Mammary epithelial cell (primary cell): ENCODE measurements at regions of chr5 and their contacts with region 1.

Region 1: DNA sequence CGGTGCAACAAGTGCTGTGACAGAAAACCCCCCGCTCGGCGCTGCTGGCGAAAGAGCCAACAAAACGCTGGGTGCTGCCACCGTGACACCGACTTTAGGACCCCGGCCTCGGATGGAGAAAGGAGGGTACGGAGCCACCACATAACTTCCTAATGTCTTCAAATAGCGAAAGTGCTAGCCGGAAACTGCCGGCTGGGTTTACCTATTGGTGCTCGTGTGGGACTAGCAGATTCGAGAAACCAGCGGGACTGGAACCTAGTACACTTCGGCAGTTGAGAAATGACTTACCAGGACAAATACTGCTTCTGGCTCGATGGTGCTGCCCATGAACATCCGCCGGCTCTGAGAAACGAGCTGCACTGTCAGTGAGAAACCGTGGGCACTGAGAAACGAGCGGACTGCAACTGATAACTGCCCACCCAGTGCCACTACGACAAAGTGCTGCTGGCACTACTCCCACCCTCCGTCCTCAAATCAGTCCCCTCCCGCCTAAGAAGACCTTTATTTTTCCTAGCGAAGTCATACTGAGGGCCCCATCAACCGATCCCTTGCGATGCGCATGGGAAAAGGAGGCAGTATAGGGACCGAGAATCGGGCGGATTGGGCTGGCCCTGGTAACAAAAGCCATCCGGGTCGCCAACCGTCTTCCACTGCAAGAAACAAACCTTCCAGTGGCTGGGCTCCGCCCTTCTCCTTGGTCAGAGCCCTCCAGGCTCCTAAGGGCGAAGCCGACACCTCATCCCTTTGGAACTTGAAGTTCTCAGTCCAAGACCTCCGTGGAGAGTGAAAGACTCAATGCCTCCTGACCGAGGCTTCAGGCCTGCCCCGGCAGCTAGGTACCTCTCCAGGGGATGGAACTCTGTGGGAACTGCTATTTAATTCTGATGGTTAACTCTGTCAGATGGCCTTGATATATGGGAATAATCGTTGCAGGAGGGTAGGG is 27.0 kb upstream of the ANXA2R start:
- DNase-seq: peak; percentile 82
- H3K4me3 ChIP-seq: peak overlapping the region; percentile 56 to 81 (median 81)
- H3K27ac ChIP-seq: peak overlapping the region; percentile 98
- H3K4me1 ChIP-seq: peaks cover 24% of the 10 kb centered on the region
- H3K27me3 ChIP-seq: no peaks in the 10 kb centered on the region
- CTCF ChIP-seq: no peak

Region 2: GRCh38 chr5:42908509-42909488 is 158.3 kb before region 1 on chr5:
- CTCF ChIA-PET with region 1: no interaction called
- dilution Hi-C with region 1: no loop called
- in situ Hi-C with region 1: no loop called
- intact Hi-C with region 1: loop called (anchors 1 kb)
- DNase-seq: peak; percentile 71
- H3K4me3 ChIP-seq: peak overlapping the region; percentile 45 to 52 (median 46)
- H3K27ac ChIP-seq: no peak overlapping the region
- H3K4me1 ChIP-seq: no peaks in the 10 kb centered on the region
- H3K27me3 ChIP-seq: no peaks in the 10 kb centered on the region
- CTCF ChIP-seq: peak; percentile 79 to 86

Region 3: GRCh38 chr5:42950440-42951292 is 116.4 kb before region 1 on chr5:
- CTCF ChIA-PET with region 1: no interaction called
- dilution Hi-C with region 1: no loop called
- in situ Hi-C with region 1: no loop called
- intact Hi-C with region 1: loop called (anchors 1 kb)
- DNase-seq: peak; percentile 98
- H3K4me3 ChIP-seq: peak overlapping the region; percentile 27 to 38 (median 33)
- H3K27ac ChIP-seq: peak overlapping the region; percentile 78
- H3K4me1 ChIP-seq: peaks cover 13% of the 10 kb centered on the region
- H3K27me3 ChIP-seq: no peaks in the 10 kb centered on the region
- CTCF ChIP-seq: no peak

Region 4: DNA sequence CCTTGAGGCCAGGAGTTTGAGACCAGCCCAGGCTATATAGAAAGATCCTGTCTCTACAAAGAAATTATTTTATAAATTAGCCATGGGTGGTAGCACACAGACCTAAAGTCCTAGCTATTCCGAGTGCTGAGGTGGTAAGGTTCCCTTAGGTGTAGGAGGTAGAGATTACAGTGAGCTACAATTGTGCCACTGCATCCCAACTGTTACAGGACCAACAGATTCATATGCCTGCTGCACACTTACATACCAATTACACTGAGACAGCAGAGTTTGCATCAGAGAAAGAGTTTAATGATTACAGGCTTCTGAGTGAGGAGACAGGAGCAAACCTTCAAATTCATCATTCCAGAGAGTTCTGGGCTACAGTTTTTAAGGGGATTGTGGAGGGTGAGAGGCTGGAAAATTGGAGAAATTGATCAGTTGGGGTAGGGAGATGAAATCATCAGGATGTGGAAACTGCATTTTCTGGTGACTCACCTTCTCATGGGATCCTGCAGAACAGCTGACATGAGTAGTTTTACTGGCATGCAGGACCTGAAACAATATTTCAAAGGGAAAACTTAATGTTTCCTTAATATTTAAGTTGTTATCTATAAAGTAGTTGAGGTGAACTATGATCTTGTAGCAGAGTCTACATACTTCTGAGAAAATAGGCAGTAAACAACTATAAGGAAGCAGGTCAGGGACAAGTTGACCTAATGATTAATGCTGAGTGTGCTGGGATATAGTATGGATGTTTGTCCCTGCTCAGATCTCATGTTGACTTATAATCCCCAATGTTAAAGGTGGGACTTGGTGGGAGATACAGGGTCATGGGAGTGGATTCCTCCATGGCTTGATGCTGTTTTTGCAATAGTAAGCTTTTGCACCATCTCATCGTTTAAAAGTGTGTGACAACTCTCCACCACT is 81.7 kb before region 1 on chr5:
- CTCF ChIA-PET with region 1: interaction called, 12 read pairs
- dilution Hi-C with region 1: no loop called
- in situ Hi-C with region 1: no loop called
- intact Hi-C with region 1: loop called (anchors 2 kb)
- DNase-seq: peak; percentile 80
- H3K4me3 ChIP-seq: no peak overlapping the region
- H3K27ac ChIP-seq: peak overlapping the region; percentile 86
- H3K4me1 ChIP-seq: peaks cover 32% of the 10 kb centered on the region
- H3K27me3 ChIP-seq: no peaks in the 10 kb centered on the region
- CTCF ChIP-seq: no peak

Region 5: GRCh38 chr5:43110606-43111442 is 43.8 kb after region 1 on chr5:
- CTCF ChIA-PET with region 1: no interaction called
- dilution Hi-C with region 1: no loop called
- in situ Hi-C with region 1: no loop called
- intact Hi-C with region 1: no loop called
- DNase-seq: no peak
- H3K4me3 ChIP-seq: no peak overlapping the region
- H3K27ac ChIP-seq: no peak overlapping the region
- H3K4me1 ChIP-seq: peaks cover 4% of the 10 kb centered on the region
- H3K27me3 ChIP-seq: no peaks in the 10 kb centered on the region
- CTCF ChIP-seq: peak; percentile 26 to 28

Region 6: DNA sequence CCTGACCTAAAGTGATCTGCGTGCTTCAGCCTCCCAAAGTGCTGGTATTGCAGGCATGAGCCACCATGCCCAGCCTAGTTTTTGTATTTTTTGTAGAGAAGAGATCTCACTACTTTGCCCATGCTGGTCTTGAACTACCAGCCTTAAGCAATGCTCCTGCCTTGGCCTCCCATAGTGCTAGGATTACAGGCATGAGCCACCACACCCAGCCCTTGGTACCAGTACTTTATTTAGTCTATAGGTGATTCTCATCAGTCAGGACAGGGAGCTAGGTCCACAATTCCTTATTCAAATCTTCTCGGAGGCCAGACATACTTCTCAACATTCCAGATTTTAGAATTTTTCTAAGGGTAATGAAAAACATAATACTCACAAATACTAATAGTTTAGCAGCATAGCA is 62.1 kb after region 1 on chr5:
- CTCF ChIA-PET with region 1: no interaction called
- dilution Hi-C with region 1: no loop called
- in situ Hi-C with region 1: no loop called
- intact Hi-C with region 1: no loop called
- DNase-seq: no peak
- H3K4me3 ChIP-seq: no peak overlapping the region
- H3K27ac ChIP-seq: no peak overlapping the region
- H3K4me1 ChIP-seq: peaks cover 1% of the 10 kb centered on the region
- H3K27me3 ChIP-seq: no peaks in the 10 kb centered on the region
- CTCF ChIP-seq: no peak